ENCODE measurements at regions of chr17 and their contacts with region 1.

Region 1: DNA sequence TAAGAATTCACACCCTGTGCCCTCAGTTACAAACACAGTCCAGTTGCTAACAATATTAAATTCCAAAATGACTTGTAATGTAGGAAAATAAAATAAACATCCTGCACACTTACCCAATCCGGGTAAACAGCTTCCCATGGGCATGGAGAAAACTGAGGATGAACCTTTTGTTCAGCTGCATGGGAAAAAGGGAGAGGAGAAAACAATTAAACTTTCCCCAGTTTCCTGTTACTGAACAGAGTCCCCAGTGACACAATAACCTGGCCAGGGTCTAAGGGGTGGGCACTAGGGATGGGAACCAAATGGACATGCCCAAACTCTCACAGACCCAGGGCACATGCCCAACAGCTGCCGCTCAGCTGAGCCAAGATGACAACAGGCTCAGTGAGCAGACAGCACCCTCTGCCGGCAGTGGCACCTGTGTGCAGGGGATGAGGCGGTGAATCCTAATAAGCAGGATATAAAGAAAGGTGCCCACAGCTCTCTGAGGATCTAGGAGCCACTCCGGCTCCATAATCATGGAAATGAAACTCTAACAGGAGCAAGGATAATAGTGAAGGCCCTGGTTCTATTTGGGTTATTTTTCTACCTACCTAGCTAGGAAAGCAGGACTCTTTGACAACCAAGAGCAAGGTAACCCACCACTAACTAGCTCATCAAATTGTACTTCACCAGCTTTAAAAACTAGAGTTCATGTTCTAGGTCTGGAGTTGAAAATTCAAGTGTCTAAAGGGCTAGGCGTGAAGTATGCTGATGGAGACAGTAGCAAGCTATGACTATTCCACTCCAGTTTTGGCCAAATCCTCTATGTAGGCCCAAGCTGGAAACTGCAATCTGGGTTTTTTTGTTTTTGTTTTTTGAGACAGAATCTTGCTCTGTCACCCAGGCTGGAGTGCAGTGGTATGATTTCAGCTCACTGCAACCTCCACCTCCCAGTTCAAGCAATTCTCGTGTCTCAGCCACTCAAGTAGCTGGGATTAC is 58.8 kb downstream of the SMG6 start:
- DNase-seq: peak; percentile 87
- H3K4me3 ChIP-seq: no peak overlapping the region; a peak in 1 of 4 replicates
- H3K27ac ChIP-seq: peak overlapping the region; percentile 18 to 67; a peak in 3 of 4 replicates
- H3K4me1 ChIP-seq: peaks cover 7 to 15% of the 10 kb centered on the region in 2 experiments; a peak in 1 of 4 replicates
- H3K27me3 ChIP-seq: no peaks in the 10 kb centered on the region
- CTCF ChIP-seq: peak; percentile 96
- EP300 ChIP-seq: no peak
- RAD21 ChIP-seq: peak; percentile 98

Region 2: DNA sequence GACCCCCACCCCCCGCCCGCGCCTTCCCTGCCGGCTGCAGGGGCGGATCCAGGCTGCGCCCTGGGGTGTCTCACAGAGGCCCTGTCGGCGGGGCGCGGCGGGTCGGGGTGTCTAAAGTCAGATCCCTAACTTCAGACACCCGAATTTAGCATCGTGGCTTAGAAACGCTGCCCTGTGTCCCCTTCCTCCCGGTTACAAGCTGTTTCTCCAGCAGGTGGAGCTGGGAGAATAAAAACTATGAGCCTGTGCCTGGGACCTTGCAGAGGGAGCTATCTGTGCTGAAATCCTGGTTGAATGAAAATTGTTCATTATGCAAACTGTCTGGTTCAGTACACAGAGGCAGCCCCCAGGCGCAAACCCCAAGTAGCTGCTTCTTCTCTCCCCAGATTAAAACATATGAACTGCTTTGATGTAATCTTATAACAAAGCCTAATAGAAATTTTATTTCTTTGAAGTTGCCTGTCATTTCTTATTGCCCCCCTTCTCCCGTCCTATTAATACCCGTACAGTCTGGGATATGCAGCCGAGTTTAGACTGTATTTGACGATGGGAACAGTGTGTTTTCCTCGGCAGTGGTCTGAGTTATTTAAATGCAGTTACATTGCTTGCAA is 336.0 kb before region 1 on chr17:
- CTCF ChIA-PET with region 1: interaction called, 22 read pairs
- POLR2A ChIA-PET with region 1: no interaction called
- DNase-seq: peak; percentile 91
- H3K4me3 ChIP-seq: peak overlapping the region in 1 of 2 experiments; percentile 48; a peak in 2 of 4 replicates
- H3K27ac ChIP-seq: no peak overlapping the region
- H3K4me1 ChIP-seq: peaks cover 0 to 19% of the 10 kb centered on the region in 2 experiments; a peak in 1 of 4 replicates
- H3K27me3 ChIP-seq: peaks cover 7% of the 10 kb centered on the region; the same call in 1 of the 2 replicates
- CTCF ChIP-seq: peak; percentile 73
- EP300 ChIP-seq: no peak
- RAD21 ChIP-seq: peak; percentile 97

Region 3: DNA sequence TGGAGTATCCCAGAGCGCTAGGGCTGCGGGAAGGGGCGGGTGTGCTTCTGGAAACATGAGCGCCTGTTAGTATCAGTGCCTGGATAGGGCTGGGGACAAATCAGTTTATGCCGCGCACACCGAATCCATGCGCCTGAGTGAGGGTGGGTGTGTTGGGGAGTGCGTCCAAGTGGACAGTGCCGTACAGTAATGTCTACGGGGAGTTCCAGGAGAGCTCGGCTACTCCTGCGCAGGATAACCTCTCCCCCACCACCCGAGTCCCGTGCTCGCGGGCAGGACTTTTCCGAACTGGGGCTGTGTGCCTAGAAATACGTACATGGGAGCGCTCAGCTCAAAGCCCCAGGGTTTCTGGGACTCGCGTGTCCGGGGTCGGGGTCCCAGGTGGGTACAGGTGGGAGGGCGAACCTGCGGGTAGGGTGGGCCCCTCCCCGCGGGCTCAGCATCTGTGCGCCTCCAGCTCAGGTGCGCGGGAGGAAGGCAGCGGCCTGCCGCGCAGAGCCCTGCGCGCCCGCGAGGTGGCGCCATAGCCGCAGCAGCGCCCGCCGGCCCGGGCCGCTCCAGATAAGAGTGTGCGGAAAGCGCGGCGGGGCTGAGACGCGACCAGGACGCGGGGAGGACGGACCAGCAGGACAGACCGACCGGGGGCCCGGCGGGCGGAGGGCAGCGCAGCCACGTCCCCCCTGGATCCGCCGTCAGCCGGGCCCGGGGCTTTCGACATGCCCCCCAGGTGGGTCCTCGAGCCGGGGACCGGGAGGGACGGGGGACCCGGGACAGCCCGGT is 190.1 kb before region 1 on chr17 and contains the start of gene HIC1:
- CTCF ChIA-PET with region 1: interaction called, 185 read pairs
- POLR2A ChIA-PET with region 1: interaction called, 9 read pairs
- DNase-seq: peak; percentile 93
- H3K4me3 ChIP-seq: peak within 1 kb of the TSS; percentile 57 to 62
- H3K27ac ChIP-seq: peak within 1 kb of the TSS in 1 of 2 experiments; percentile 55; a peak in 1 of 4 replicates
- H3K4me1 ChIP-seq: peaks cover 0 to 6% of the 10 kb centered on the region in 2 experiments; a peak in 1 of 4 replicates
- H3K27me3 ChIP-seq: no peaks in the 10 kb centered on the region
- CTCF ChIP-seq: peak; percentile 72
- EP300 ChIP-seq: no peak; a peak in 1 of 4 replicates
- RAD21 ChIP-seq: peak; percentile 88
- polyA plus RNA-seq, gene HIC1: 3.8 and 6.4 TPM in 2 replicates

Region 4: GRCh38 chr17:2083613-2084128 is 161.2 kb before region 1 on chr17:
- CTCF ChIA-PET with region 1: interaction called, 18 read pairs
- POLR2A ChIA-PET with region 1: no interaction called
- DNase-seq: no peak
- H3K4me3 ChIP-seq: no peak overlapping the region
- H3K27ac ChIP-seq: peak overlapping the region in 1 of 2 experiments; percentile 89; a peak in 3 of 4 replicates
- H3K4me1 ChIP-seq: peaks cover 19 to 76% of the 10 kb centered on the region in 2 experiments
- H3K27me3 ChIP-seq: no peaks in the 10 kb centered on the region
- CTCF ChIP-seq: no peak
- EP300 ChIP-seq: no peak
- RAD21 ChIP-seq: no peak

Region 5: DNA sequence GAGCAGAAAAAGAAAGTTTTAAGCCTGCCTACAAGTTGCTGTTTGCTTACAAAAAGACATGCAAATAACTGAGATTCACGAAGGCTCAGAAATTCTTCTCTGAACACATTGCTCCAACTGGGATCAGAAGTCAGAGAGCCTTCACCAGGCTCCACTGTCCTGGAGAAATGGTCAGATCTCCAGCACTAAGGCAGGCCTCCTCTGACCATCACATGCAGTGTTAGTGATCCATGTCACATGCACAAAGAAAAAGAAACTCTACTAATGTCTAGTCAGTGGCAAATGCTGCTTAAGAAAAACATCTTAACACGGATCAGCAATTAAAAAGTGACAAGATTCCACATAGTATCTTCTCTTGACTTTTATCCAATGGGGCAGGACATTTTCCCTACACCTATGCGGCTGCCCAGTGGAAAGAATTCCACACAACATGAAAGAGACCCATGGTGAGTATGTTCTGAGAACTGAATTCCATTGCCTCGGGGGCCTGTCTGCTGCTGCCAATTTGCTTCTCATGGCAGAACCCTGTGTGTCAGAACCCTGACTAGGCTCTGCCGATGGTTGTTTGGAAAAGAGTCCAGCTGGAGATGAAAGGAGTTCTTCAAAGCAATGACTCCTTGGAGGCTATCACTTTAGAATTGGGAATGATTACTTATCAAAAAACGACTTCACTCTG is 93.3 kb before region 1 on chr17:
- CTCF ChIA-PET with region 1: interaction called, 11 read pairs
- POLR2A ChIA-PET with region 1: no interaction called
- DNase-seq: no peak
- H3K4me3 ChIP-seq: no peak overlapping the region
- H3K27ac ChIP-seq: 0 out of 4 replicates have a peak overlapping the region, but pooled peaks of 1 of the 2 experiments have one; percentile 1
- H3K4me1 ChIP-seq: peaks cover 0 to 4% of the 10 kb centered on the region in 2 experiments; a peak in 1 of 4 replicates
- H3K27me3 ChIP-seq: no peaks in the 10 kb centered on the region
- CTCF ChIP-seq: no peak
- EP300 ChIP-seq: no peak
- RAD21 ChIP-seq: no peak

Region 6: DNA sequence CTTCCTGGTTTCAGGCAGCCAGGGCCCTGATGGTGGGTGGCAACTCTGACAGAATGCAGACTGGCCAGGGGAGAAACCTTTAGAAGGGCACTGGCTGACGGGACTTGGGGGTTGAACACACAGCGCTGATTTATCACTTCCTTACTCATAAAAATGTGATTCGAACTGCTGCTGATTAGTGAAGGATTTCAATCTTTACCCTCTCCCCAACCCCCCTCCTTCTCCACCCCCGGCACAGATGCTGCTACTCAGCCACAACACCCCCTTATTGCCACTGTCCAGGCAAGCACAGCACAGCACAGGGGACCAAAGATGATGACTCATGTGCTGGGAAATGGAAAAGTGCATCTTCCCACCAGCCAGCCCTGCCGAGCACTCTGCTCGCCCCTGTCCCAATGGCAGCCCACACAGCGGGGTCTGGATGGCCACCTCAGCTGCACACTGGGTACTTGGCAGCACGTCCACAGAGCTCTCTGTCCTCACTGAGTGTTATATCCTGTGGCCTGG is 11.3 kb before region 1 on chr17:
- CTCF ChIA-PET with region 1: interaction called, 40 read pairs
- POLR2A ChIA-PET with region 1: interaction called, 3 read pairs
- DNase-seq: no peak
- H3K4me3 ChIP-seq: no peak overlapping the region
- H3K27ac ChIP-seq: peak overlapping the region; percentile 76 to 93
- H3K4me1 ChIP-seq: peaks cover 21 to 37% of the 10 kb centered on the region in 2 experiments
- H3K27me3 ChIP-seq: no peaks in the 10 kb centered on the region
- CTCF ChIP-seq: no peak
- EP300 ChIP-seq: no peak
- RAD21 ChIP-seq: no peak

Region 7: DNA sequence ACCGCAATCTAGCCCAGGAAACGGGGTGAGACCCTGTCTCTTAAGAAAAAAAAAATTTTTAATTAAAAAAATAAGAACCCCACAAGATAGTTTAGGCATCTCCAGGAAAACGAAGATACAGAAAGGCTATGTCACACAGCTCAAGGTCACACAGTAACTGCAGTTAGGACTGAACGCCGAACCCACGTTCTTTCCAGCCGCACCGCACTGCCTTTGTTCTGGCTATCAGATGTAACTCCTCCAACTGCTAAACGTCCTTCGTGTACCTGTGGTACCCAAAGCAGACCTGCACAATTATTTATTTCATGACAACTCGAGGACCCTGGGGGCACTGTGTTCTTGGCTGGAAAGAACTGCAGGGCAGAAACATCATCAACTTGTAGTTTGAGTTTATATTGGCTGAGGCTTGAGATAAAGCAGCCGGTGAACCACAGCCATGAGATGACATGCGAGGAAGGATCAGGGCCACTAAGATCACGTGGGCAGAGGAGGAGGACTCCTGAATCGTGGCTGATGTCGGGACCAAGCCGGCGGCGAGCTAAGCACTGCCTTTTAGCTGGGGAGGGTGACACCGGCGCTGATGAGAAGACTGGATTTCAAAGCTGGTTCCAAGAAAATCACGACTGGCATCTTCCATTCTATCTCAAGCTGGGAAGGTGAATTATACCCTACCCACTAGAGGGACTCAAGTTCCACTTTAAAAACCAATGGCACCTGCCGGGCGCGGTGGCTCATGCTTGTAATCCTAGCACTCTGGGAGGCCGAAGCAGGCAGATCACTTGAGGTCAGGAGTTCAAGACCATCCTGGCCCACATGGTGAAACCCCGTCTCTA is 176.7 kb after region 1 on chr17:
- CTCF ChIA-PET with region 1: no interaction called
- POLR2A ChIA-PET with region 1: no interaction called
- DNase-seq: no peak
- H3K4me3 ChIP-seq: no peak overlapping the region
- H3K27ac ChIP-seq: no peak overlapping the region
- H3K4me1 ChIP-seq: no peaks in the 10 kb centered on the region
- H3K27me3 ChIP-seq: no peaks in the 10 kb centered on the region
- CTCF ChIP-seq: peak; percentile 17; the same call in 1 of the 2 replicates
- EP300 ChIP-seq: no peak
- RAD21 ChIP-seq: peak; percentile 40; the same call in 1 of the 2 replicates